ENCODE measurements at regions of chr2 and their contacts with region 1.

Region 1: GRCh38 chr2:28356095-28356911 is 36.4 kb upstream of the FOSL2 start:
- DNase-seq: peak in 1 of 2 donors; percentile 73
- ATAC-seq: peak in 1 of 3 donors; percentile 14
- H3K4me3 ChIP-seq: no peak overlapping the region
- H3K4me3 Mint-ChIP-seq: no peak overlapping the region
- H3K27ac ChIP-seq: peak overlapping the region; percentile 29
- H3K27ac Mint-ChIP-seq: peak overlapping the region; percentile 63 to 80
- H3K4me1 ChIP-seq: peaks cover 59% of the 10 kb centered on the region
- H3K4me1 Mint-ChIP-seq: peaks cover 24 to 55% of the 10 kb centered on the region in 2 donors
- H3K27me3 ChIP-seq: no peaks in the 10 kb centered on the region
- H3K27me3 Mint-ChIP-seq: no peaks in the 10 kb centered on the region
- CTCF ChIP-seq: no peak

Region 2: DNA sequence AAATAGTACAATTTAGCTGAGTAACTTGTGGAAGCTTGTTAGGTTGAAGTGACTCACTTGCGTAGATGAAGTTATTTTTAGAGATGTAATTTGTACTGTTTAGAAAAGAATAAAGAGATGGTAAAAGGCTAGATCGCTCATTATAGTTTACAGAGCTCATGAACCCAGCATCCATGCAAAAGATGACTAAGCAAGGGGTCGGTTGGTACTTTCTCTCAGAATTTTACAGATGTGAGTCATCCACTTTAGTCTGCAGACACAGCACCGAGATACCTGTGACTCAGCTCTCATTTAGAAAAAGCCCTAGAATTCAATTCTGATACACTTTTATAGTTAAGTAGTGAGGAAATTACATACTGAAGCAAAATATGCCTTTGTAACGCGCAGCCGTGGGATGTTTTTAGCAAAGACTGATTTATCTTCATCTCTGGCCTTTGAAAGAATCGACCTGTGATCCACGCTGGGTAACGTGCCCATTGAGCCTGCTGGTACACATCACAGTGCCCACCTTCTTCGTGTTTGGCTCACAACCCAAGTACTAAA is 80.2 kb before region 1 on chr2:
- intact Hi-C with region 1: loop called (anchors 5 kb)
- DNase-seq: no peak
- ATAC-seq: no peak
- H3K4me3 ChIP-seq: no peak overlapping the region
- H3K4me3 Mint-ChIP-seq: no peak overlapping the region
- H3K27ac ChIP-seq: no peak overlapping the region
- H3K27ac Mint-ChIP-seq: no peak overlapping the region
- H3K4me1 ChIP-seq: peaks cover 25% of the 10 kb centered on the region
- H3K4me1 Mint-ChIP-seq: peaks cover 22 to 34% of the 10 kb centered on the region in 2 donors
- H3K27me3 ChIP-seq: no peaks in the 10 kb centered on the region
- H3K27me3 Mint-ChIP-seq: no peaks in the 10 kb centered on the region
- CTCF ChIP-seq: no peak